ENCODE measurements at regions of chr13 and their contacts with region 1.

Region 1: GRCh38 chr13:25827831-25828465 is 223.9 kb downstream of the SHISA2 start:
- DNase-seq: no peak
- ATAC-seq: no peak
- H3K4me3 Mint-ChIP-seq: no peak overlapping the region
- H3K27ac Mint-ChIP-seq: no peak overlapping the region
- H3K4me1 Mint-ChIP-seq: no peaks in the 10 kb centered on the region
- H3K27me3 Mint-ChIP-seq: peaks cover 3% of the 10 kb centered on the region

Region 2: DNA sequence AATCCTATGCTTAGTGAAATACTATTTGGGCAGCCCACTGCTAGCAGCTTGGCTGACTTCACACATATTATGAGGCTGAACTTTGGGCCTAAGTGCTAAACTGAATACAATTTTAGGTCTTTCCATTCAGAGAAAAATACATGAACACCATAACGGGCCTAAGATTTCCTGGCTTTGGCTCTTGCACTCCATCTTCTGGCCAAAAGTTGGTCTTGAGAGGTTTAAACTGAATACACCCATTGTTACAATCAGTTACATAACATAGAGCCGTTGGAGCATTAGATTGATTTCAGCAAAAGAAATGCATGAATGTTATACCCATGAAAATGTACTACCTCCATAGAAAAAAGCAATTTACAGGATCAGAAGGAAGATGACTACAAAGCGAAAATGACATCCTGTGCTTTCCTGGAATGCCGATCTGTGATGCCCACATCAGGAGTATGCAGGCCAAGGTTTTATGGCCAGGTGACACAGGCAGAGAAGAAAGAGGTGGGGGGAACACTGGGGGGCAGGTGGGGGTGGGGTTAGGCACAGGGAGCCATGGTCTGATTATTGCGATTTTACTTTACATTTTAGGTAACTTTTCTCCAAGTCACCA is 235.0 kb after region 1 on chr13:
- CTCF ChIA-PET with region 1: interaction called, 23 read pairs
- POLR2A ChIA-PET with region 1: no interaction called
- DNase-seq: peak; percentile 59
- ATAC-seq: peak; percentile 57
- H3K4me3 Mint-ChIP-seq: no peak overlapping the region
- H3K27ac Mint-ChIP-seq: no peak overlapping the region
- H3K4me1 Mint-ChIP-seq: peaks cover 15% of the 10 kb centered on the region
- H3K27me3 Mint-ChIP-seq: peaks cover 11% of the 10 kb centered on the region

Measured in activated CD8-positive, alpha-beta T cell treated with anti-CD3 and anti-CD28 coated beads, Interleukin-2, amount 10 ng/mL, durations not matched to agents 7 days and 5 days (primary cell).